Panc1 (cell line): ENCODE measurements at regions of chr7 and their contacts with region 1.

Region 1: GRCh38 chr7:91573405-91573804 is 307.1 kb downstream of the MTERF1 start:
- DNase-seq: no peak
- ATAC-seq: no peak
- H3K4me3 ChIP-seq: no peak overlapping the region
- H3K27ac ChIP-seq: no peak overlapping the region
- H3K4me1 ChIP-seq: no peaks in the 10 kb centered on the region
- H3K27me3 ChIP-seq: no peaks in the 10 kb centered on the region
- CTCF ChIP-seq: no peak

Region 2: GRCh38 chr7:91551377-91552175 is 21.8 kb before region 1 on chr7:
- CTCF ChIA-PET with region 1: no interaction called
- POLR2A ChIA-PET with region 1: interaction called, 12 read pairs
- in situ Hi-C with region 1: no loop called
- intact Hi-C with region 1: no loop called
- DNase-seq: no peak
- ATAC-seq: no peak
- H3K4me3 ChIP-seq: no peak overlapping the region
- H3K27ac ChIP-seq: no peak overlapping the region
- H3K4me1 ChIP-seq: no peaks in the 10 kb centered on the region
- H3K27me3 ChIP-seq: no peaks in the 10 kb centered on the region
- CTCF ChIP-seq: no peak